HEK293T (cell line): ENCODE measurements at regions of chr12 and their contacts with region 1.

Region 1: DNA sequence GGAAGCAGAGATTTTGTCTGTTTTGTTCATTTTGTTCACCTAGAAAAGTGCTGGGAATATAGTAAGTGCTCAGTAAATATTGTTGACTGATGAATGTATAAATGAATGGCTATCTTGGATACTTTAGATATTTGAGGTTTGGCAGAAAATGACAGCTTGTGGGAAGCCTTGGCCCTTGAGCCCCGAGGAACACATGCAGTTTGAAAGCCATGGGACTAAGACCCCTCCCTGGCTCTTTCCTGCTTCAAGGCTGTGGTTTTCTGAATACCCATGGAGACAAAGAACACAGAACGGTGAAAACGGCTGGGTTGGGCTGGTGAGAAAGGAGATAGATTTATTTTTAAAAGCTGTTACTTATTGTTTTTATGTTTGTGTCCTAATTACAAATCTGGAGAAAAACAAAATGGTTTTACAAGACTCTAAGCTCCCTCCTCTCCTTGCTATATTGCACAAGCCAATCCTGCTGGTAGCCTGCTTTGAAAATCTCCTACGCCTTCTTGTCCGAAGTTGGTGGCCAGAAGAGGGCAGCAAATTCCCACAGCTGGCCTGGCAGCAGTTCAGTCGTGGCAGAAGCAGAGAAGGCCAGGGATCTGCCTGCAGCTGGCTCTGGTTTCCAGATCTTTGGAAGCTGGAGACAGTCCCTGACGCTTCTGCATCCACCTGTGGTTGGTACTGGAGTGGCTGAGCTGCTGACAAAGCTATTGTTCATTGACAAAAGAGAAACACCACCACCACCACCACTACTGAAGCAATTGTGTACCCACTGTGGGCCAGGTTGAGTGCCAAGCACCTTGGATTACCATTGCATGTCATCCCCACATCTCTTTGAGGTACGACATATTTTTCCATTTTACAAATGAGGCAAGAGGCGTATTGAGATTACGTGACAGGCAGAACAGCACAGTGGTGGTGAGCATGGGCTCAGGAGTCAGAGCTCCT is 5.2 kb upstream of the KRT85 start:
- DNase-seq: peak; percentile 80

Region 2: GRCh38 chr12:52362118-52362726 is 10.3 kb before region 1 on chr12:
- CTCF ChIA-PET with region 1: interaction called, 13 read pairs
- POLR2A ChIA-PET with region 1: no interaction called
- DNase-seq: no peak

Region 3: GRCh38 chr12:52879394-52880351 is 507.2 kb after region 1 on chr12:
- CTCF ChIA-PET with region 1: interaction called, 20 read pairs
- POLR2A ChIA-PET with region 1: interaction called, 4 read pairs
- DNase-seq: peak; percentile 85